Left colon (tissue), 2 donors: ENCODE measurements at regions of chr4 and their contacts with region 1.

Region 1: DNA sequence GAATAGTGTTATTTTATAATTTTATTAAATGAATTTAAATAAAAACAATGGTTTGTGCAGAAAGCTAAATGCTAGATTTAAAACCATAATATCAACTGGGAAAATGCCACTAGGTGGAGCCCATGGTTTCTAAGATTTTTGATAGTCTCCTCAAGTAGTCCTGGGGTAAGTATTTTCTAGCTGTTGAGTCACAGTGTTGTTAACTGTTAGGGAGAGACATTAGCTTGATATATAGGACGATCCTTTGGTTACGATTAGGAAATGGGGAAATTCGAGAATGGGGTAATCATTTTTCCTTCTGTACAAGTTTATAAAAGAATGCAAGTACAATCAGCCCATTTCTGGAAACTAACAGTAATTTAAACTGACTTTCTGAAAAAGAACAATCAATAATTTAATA is 378.4 kb downstream of the ANKRD50 start:
- DNase-seq: peak in 1 of 2 donors; percentile 34
- ATAC-seq: peak; percentile 71

Region 2: DNA sequence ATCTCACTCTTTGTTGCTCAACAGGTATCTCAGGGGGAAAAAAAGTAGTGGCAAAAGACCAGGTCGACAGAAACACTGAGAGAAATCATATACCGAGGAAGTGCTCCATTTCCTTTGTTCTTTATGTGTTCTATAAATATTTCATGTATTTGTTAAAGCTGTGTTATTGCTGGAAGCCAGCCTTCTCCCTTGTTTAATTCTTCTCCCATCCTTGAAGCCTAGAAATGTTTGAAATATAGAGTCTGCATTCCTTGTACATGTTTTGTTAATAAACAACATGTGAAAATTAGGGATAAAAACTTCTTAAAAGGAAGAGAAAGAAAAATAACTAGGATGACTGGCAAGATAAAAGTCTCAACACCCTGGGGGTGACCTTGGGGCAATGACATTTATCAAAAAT is 192.2 kb after region 1 on chr4:
- intact Hi-C with region 1: no loop called
- DNase-seq: no peak
- ATAC-seq: no peak

Region 3: DNA sequence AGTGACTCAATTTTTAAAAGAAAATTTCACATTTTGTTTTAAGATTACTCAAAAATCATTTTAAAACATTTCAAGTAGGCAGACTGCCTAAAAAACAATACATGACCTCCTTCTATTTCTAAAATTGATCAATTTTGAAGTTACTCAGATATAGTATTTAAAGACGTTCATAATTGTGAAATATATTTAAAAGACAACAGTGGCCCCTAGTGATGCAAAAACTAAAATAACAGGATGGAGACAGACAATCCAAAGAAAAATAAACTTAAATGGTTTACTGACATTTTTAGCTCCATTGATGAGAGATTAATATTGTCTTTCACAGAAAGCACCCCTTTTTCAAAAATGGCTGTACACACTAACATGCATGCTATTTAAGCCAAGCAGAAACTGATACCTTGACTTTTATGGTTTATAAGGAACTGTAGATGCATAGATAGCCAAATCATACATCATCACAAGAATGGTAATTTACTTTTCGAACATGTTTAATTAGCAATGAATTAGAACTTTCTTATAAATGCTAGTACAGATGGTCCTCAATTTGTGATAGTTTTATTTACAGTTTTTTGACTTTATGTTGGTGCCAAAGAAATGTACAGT is 910.8 kb after region 1 on chr4:
- intact Hi-C with region 1: loop called in 1 of 2 experiments (anchors 5 kb)
- DNase-seq: no peak
- ATAC-seq: no peak

Region 4: GRCh38 chr4:125283707-125284279 is 949.7 kb after region 1 on chr4:
- intact Hi-C with region 1: loop called in 1 of 2 experiments (anchors 10 kb)
- DNase-seq: no peak
- ATAC-seq: no peak